A673 (cell line): ENCODE measurements at regions of chr6 and their contacts with region 1.

Region 1: DNA sequence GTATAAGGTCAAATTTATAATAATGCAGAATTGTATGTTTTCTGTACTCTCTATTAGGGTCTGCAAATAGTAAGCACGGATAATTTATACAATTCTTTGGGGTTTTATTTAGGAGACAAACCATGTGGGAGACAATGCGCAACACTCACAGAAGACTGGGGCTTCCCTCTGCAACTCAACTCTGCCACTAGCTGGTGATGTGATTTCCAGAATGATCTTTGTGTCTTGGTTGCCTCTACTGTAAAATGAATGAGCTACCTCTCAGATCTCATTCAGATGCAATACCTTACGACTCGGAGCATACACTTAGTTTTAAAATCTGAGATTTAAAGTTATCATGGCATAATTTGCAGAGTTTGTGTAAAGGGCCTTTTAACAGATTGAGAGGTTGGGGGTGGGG is 6.4 kb downstream of the MAN1A1 start:
- DNase-seq: no peak
- H3K4me3 ChIP-seq: no peak overlapping the region
- H3K27ac ChIP-seq: no peak overlapping the region
- H3K4me1 ChIP-seq: no peaks in the 10 kb centered on the region
- H3K27me3 ChIP-seq: peaks cover 60% of the 10 kb centered on the region
- CTCF ChIP-seq: no peak

Region 2: GRCh38 chr6:118952683-118953082 is 390.5 kb before region 1 on chr6:
- CTCF ChIA-PET with region 1: no interaction called
- POLR2A ChIA-PET with region 1: no interaction called
- intact Hi-C with region 1: no loop called
- DNase-seq: no peak
- H3K4me3 ChIP-seq: no peak overlapping the region
- H3K27ac ChIP-seq: no peak overlapping the region
- H3K4me1 ChIP-seq: no peaks in the 10 kb centered on the region
- H3K27me3 ChIP-seq: no peaks in the 10 kb centered on the region
- CTCF ChIP-seq: no peak

Region 3: GRCh38 chr6:119322715-119323350 is 20.3 kb before region 1 on chr6:
- CTCF ChIA-PET with region 1: no interaction called
- POLR2A ChIA-PET with region 1: no interaction called
- intact Hi-C with region 1: loop called (anchors 1 kb)
- DNase-seq: no peak
- H3K4me3 ChIP-seq: no peak overlapping the region
- H3K27ac ChIP-seq: no peak overlapping the region
- H3K4me1 ChIP-seq: no peaks in the 10 kb centered on the region
- H3K27me3 ChIP-seq: no peaks in the 10 kb centered on the region
- CTCF ChIP-seq: no peak